ENCODE measurements at regions of chr12 and their contacts with region 1.

Region 1: DNA sequence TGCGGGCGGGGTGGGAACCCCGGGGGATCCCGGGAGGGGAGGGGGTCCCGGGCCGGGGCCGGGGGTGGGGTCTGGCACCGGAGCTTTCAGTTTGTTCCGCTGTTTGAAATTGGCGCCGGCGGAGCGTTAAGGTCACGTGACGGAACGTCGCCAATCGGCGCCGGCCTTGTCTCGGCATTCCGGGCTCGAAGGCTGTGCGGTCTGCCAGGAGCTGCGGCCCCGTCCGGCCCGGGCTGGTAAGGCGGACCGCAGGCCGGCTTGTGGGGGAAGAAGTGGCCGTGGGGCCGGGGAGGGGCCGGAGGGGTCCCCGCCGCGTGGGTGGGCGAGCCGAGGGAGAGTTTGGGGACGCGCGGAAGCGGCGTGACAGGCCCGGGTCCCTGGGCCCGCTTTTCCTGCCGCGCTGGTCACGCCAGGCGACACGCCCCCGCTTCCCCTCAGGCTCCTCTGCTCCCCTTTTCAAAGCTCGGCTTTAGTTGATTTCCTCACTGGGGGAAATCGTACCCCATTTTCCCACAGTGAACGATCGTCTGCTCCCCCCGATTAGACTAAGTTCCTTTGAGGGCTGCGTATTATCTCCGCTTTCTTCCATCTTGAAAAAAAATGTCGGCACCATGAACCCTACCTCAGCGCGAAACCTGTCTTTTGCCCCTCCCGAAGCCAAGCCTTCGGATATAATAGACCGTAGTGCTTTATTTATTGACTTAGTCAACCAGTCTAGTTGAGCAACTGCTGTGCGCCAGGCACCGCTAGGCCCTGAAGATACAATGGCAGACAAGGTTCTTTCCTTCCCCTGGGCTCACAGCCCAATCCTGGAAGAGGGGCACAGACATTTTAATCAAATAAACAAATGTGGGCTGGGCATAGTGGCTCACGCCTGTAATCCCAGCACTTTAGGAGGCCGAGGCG is at the starts of genes FOXM1 and RHNO1:
- DNase-seq: peak; percentile 92
- ATAC-seq: peak; percentile 77
- H3K4me3 Mint-ChIP-seq: peak within 1 kb of the TSS; percentile 99
- H3K27ac Mint-ChIP-seq: peak within 1 kb of the TSS; percentile 99
- H3K4me1 Mint-ChIP-seq: peaks cover 31% of the 10 kb centered on the region
- H3K27me3 Mint-ChIP-seq: no peaks in the 10 kb centered on the region
- total RNA-seq, gene FOXM1: 74.5 to 92.3 TPM
- total RNA-seq, gene RHNO1: 61.1 to 91.4 TPM

Region 2: GRCh38 chr12:2004113-2004929 is 873.0 kb before region 1 on chr12 and contains the start of gene DCP1B:
- CTCF ChIA-PET with region 1: no interaction called
- POLR2A ChIA-PET with region 1: no interaction called
- intact Hi-C with region 1: loop called in 1 of 2 experiments (anchors 10 kb)
- DNase-seq: peak; percentile 98
- ATAC-seq: peak; percentile 100
- H3K4me3 Mint-ChIP-seq: peak within 1 kb of the TSS; percentile 95
- H3K27ac Mint-ChIP-seq: peak within 1 kb of the TSS; percentile 99
- H3K4me1 Mint-ChIP-seq: peaks cover 25% of the 10 kb centered on the region
- H3K27me3 Mint-ChIP-seq: no peaks in the 10 kb centered on the region
- total RNA-seq, gene DCP1B: 14.5 to 16.1 TPM

Region 3: DNA sequence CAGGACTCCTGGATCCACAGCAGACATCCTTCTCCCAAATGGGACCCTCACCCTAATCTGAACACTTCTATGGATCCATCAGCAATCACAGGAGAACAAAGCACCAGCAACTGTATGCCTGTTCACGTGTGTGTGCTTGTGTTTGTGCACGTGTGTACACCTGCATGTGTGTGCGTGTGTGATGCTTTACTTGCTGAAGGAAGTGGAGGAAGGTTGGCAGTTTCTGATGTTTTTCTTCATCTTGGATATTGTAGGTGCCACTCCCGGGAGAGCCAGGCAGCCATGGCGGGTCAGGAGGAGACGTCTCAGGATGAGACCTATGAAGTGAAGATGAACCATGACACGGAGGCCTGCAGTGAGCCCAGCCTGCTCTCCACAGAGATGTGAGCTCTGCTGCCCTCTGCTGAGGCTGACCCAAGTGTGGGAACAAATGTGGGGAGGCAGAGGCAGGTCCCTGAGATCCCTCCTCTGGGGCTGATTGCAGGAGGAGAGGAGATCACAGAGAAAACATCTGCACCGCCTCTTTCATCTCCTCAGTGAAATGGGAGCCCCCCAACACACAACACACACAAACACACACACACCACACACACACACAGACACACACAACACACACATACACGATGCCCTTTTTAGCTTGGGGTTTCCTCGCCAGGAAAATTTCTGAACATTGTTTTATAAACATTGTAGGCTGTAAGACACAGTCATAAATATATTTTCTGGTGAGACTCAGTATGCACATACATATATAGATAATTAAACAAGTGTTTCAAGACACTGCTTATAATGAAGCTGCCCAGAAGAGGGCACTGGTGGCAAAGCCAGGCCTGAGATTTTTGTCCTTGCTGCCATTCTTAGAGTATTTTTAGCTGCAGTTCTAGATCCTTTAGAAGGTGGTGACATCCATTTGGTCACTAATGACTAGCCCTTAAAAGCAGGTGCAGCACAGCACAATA is 194.7 kb before region 1 on chr12:
- CTCF ChIA-PET with region 1: no interaction called
- POLR2A ChIA-PET with region 1: no interaction called
- intact Hi-C with region 1: no loop called
- DNase-seq: peak; percentile 62
- ATAC-seq: peak; percentile 74
- H3K4me3 Mint-ChIP-seq: no peak overlapping the region
- H3K27ac Mint-ChIP-seq: peak overlapping the region; percentile 86
- H3K4me1 Mint-ChIP-seq: peaks cover 6% of the 10 kb centered on the region
- H3K27me3 Mint-ChIP-seq: no peaks in the 10 kb centered on the region

Region 4: GRCh38 chr12:2794736-2795289 is 82.5 kb before region 1 on chr12 and contains the start of gene FKBP4:
- CTCF ChIA-PET with region 1: interaction called, 4 read pairs
- POLR2A ChIA-PET with region 1: interaction called, 4 read pairs
- intact Hi-C with region 1: loop called in 1 of 2 experiments (anchors 1 kb)
- DNase-seq: peak; percentile 95
- ATAC-seq: peak; percentile 90
- H3K4me3 Mint-ChIP-seq: peak within 1 kb of the TSS; percentile 90
- H3K27ac Mint-ChIP-seq: peak within 1 kb of the TSS; percentile 67
- H3K4me1 Mint-ChIP-seq: peaks cover 20% of the 10 kb centered on the region
- H3K27me3 Mint-ChIP-seq: no peaks in the 10 kb centered on the region
- total RNA-seq, gene FKBP4: 129 to 182 TPM

Region 5: GRCh38 chr12:2890388-2891239 is 13.3 kb after region 1 on chr12 and contains the start of gene TULP3:
- CTCF ChIA-PET with region 1: interaction called, 11 read pairs
- POLR2A ChIA-PET with region 1: interaction called, 9 read pairs
- intact Hi-C with region 1: loop called (anchors 1 to 2 kb)
- DNase-seq: peak; percentile 98
- ATAC-seq: peak; percentile 98
- H3K4me3 Mint-ChIP-seq: peak within 1 kb of the TSS; percentile 85
- H3K27ac Mint-ChIP-seq: peak within 1 kb of the TSS; percentile 79
- H3K4me1 Mint-ChIP-seq: peaks cover 25% of the 10 kb centered on the region
- H3K27me3 Mint-ChIP-seq: no peaks in the 10 kb centered on the region
- total RNA-seq, gene TULP3: 5.9 to 7.3 TPM

Region 6: GRCh38 chr12:3041558-3042164 is 164.4 kb after region 1 on chr12:
- CTCF ChIA-PET with region 1: interaction called, 3 read pairs
- POLR2A ChIA-PET with region 1: no interaction called
- intact Hi-C with region 1: loop called in 1 of 2 experiments (anchors 10 kb)
- DNase-seq: peak; percentile 79
- ATAC-seq: peak; percentile 98
- H3K4me3 Mint-ChIP-seq: no peak overlapping the region
- H3K27ac Mint-ChIP-seq: no peak overlapping the region
- H3K4me1 Mint-ChIP-seq: no peaks in the 10 kb centered on the region
- H3K27me3 Mint-ChIP-seq: peaks cover 22% of the 10 kb centered on the region

Measured in activated CD4-positive, alpha-beta T cell treated with anti-CD3 and anti-CD28 coated beads for 36 hours (primary cell).